Natural killer cell (primary cell): ENCODE measurements at regions of chr4 and their contacts with region 1.

Region 1: DNA sequence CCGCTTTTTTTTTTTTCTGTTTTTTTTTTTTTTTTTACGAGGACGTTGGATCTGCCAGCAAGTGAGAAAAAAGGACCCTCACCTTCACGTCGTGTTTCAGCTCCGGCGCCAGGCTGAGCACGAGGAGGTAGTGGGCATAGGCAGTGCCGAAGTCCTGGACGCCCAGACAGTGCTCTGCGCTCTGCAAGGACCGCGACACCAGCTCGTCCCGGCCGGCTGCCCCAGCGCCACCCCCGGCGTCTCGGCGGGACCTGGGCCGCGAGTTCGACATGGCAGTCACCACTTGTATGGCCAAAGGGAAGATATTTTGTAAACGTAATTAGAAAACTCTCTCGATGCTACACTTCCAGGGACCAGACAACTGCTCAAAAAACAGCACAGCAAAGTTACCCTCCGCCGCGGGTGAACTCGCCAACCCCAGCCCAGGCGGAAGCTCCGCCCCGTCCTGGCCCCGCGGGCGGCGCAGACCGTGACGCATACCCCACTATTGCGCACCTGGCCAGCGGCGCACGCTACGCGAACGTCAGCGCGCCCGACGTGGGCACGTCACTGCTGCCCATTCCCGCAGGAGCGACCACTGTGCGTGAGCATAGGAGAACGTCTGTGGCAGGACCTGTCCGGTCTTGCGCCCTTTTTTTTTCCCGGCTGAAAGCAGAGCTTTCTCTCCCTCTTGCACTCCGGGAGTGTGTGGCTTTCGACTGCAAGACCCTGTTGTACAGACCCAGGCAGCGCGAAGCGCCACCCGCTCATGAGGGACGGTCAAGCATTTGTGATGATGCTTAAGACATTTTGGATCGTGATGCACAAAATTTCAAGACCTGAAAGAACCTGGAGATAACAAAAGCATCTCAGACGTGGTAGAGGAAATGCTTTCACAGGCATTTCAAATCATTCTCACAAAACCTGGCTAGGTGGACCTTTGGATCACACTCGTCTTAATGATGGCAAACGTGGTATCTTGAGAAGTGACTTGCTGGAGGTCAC is at the start of gene PRMT9:
- DNase-seq: peak; percentile 85 to 94
- ATAC-seq: peak; percentile 96 to 98 (median 96)
- H3K4me3 ChIP-seq: peak within 1 kb of the TSS; percentile 89
- H3K4me3 Mint-ChIP-seq: peak within 1 kb of the TSS; percentile 98
- H3K27ac ChIP-seq: peak within 1 kb of the TSS; percentile 90
- H3K27ac Mint-ChIP-seq: peak within 1 kb of the TSS; percentile 94 to 96
- H3K4me1 ChIP-seq: peaks cover 11% of the 10 kb centered on the region
- H3K4me1 Mint-ChIP-seq: peaks cover 38 to 42% of the 10 kb centered on the region in 2 donors
- H3K27me3 ChIP-seq: no peaks in the 10 kb centered on the region
- H3K27me3 Mint-ChIP-seq: peaks cover 4 to 11% of the 10 kb centered on the region in 2 donors
- CTCF ChIP-seq: no peak
- total RNA-seq, gene PRMT9: 13.4 to 16.6 (median 13.7) TPM

Region 2: DNA sequence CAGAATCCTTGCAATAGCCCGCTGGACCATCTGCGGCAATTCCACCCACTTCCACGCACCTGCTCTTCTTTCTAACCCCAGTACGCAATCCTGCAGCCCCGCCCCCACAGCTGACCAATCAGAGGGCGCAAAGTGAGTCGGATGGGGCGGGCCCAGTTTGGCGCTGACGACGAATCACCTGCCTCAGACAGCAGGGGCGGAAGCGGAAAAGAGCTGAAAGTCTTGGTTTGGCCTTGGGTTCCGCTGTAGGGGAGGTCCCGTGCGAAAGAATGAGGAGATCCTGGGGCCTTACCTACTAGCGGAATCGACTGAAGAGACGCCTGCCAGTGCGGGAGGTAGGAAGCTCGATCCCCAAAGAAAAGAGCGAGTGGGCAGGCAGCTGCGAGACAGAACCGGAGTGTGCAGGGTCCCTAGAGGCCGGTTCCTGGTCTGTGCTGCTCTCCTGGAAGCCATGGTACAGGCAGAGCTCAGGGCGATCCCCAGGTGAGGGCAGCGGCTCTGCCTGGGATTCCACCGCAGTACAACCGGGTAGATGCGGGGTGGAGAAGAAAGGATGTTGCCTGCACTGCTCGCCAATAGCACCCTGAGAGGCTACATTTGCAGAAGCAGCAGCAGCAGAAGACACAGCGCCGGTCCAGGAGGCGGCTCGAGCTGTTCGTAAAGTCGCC is 66.7 kb before region 1 on chr4 and contains the start of gene TMEM184C:
- intact Hi-C with region 1: loop called (anchors 1 kb)
- DNase-seq: peak; percentile 98 to 99
- ATAC-seq: peak; percentile 94 to 99 (median 96)
- H3K4me3 ChIP-seq: peak within 1 kb of the TSS; percentile 54
- H3K4me3 Mint-ChIP-seq: peak within 1 kb of the TSS; percentile 99
- H3K27ac ChIP-seq: peak within 1 kb of the TSS; percentile 80
- H3K27ac Mint-ChIP-seq: peak within 1 kb of the TSS; percentile 96 to 99
- H3K4me1 ChIP-seq: peaks cover 20% of the 10 kb centered on the region
- H3K4me1 Mint-ChIP-seq: peaks cover 30% of the 10 kb centered on the region in 2 donors
- H3K27me3 ChIP-seq: no peaks in the 10 kb centered on the region
- H3K27me3 Mint-ChIP-seq: peaks cover 9 to 32% of the 10 kb centered on the region in 2 donors
- CTCF ChIP-seq: no peak
- total RNA-seq, gene TMEM184C: 14.4 to 15.5 (median 15.1) TPM